ENCODE measurements at regions of chr4 and their contacts with region 1.

Region 1: DNA sequence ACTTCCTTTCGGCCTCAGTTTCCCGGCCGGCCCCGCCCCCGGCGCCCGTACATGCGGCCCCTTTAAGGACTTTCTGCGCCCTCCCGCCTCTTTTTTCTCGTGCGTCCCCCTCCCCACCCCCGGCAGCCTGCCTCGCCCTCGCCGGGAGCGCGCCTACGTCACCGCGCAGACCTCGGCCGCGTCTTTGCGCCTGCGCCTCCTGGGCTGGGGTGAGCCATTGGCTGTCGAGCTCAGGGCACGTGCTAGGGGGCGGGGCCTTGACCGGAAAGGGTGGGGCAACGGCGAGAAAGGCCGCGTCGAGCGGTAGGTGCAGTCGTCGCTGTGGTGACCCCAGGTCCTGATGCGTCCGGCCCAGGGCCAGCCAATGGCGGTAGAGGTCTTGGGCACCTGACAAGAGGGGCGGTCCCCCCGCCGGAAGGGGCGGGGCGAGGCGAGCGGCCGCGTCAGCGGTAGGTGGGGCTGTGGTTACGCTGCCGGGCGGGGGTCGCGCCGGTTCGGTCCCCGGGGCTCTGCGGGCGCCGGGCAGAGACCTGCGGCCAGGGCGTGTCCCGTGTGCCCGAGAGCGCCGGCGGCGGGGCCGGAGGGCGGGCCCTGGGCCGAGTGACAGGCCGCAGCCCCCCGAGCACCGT is at the start of gene UVSSA:
- DNase-seq: peak; percentile 99 to 100 (median 100)
- H3K4me3 ChIP-seq: peak within 1 kb of the TSS; percentile 59 to 100 (median 92)
- H3K27ac ChIP-seq: peak within 1 kb of the TSS; percentile 65 to 98 (median 92)
- H3K27me3 ChIP-seq: no peaks in the 10 kb centered on the region
- CTCF ChIP-seq: peak in 11 of 56 donors; percentile 4 to 41 (median 26)
- total RNA-seq, gene UVSSA: 11.7 to 47.4 (median 23.2) TPM

Region 2: GRCh38 chr4:1167247-1167949 is 179.5 kb before region 1 on chr4:
- intact Hi-C with region 1: loop called (anchors 2 to 10 kb)
- DNase-seq: peak in 9 of 10 donors; percentile 71 to 86 (median 77)
- H3K4me3 ChIP-seq: peak overlapping the region; percentile 49 to 98 (median 68)
- H3K27ac ChIP-seq: peak overlapping the region in 2 of 59 donors; percentile 21 to 74
- H3K27me3 ChIP-seq: peaks cover 0 to 35% (median 27%) of the 10 kb centered on the region in 45 donors
- CTCF ChIP-seq: peak; percentile 65 to 96 (median 91)

Region 3: GRCh38 chr4:1289207-1290164 is 57.4 kb before region 1 on chr4 and contains the start of gene MAEA:
- intact Hi-C with region 1: loop called (anchors 2 to 5 kb)
- DNase-seq: peak; percentile 93 to 99 (median 97)
- H3K4me3 ChIP-seq: peak within 1 kb of the TSS; percentile 58 to 100 (median 93)
- H3K27ac ChIP-seq: peak within 1 kb of the TSS in 54 of 59 donors; percentile 6 to 89 (median 76)
- H3K27me3 ChIP-seq: no peaks in the 10 kb centered on the region
- CTCF ChIP-seq: peak in 31 of 56 donors; percentile 3 to 50 (median 21)
- total RNA-seq, gene MAEA: 49.4 to 93.0 (median 72.8) TPM

Region 4: GRCh38 chr4:1309261-1310010 is 37.5 kb before region 1 on chr4:
- intact Hi-C with region 1: loop called in 1 of 2 experiments (anchors 5 kb)
- DNase-seq: peak; percentile 49 to 89 (median 85)
- H3K4me3 ChIP-seq: peak overlapping the region; percentile 7 to 73 (median 53)
- H3K27ac ChIP-seq: peak overlapping the region in 53 of 59 donors; percentile 3 to 84 (median 65)
- H3K27me3 ChIP-seq: no peaks in the 10 kb centered on the region
- CTCF ChIP-seq: peak in 23 of 56 donors; percentile 9 to 52 (median 23)

Measured in dorsolateral prefrontal cortex (tissue), 120 donors.